ENCODE measurements at regions of chr18 and their contacts with region 1.

Region 1: DNA sequence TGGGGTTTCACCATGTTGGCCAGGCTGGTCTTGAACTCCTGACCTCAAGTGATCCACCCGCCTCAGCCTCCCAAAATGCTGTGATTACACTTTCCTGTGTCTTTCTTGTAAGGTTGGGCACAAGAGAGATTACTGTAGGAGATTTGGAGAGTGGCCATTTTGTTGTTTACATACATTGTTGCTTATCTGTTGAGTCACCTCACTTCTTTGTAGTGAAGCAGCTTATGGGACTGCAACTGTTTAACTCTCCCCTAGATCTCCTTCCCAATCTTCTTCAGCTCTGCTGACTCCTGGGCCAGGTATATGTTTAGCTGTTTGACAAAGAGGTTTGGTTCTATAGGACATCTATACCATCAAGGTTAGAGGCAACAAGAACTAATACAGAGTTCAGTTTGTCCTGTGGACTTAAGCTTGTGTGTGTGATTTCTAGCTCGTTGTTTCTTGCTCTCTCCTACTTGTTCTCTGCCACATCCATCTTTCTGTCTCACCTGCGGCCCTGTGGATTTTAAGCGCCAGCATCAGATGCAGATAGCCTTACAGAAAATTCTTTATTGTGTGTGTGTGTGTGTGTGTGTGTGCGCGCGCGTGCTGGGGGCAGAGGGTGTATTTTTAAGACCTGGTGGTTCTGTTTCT is 95.4 kb downstream of the HAUS1 start:
- DNase-seq: peak; percentile 44 to 91
- H3K4me3 ChIP-seq: no peak overlapping the region
- H3K27ac ChIP-seq: peak overlapping the region; percentile 49
- H3K4me1 ChIP-seq: peaks cover 25% of the 10 kb centered on the region
- H3K27me3 ChIP-seq: no peaks in the 10 kb centered on the region
- CTCF ChIP-seq: no peak

Region 2: GRCh38 chr18:46104128-46104911 is 95.3 kb before region 1 on chr18 and contains the start of gene HAUS1:
- CTCF ChIA-PET with region 1: no interaction called
- POLR2A ChIA-PET with region 1: interaction called, 15 read pairs
- intact Hi-C with region 1: no loop called
- DNase-seq: peak; percentile 74 to 82
- H3K4me3 ChIP-seq: peak within 1 kb of the TSS; percentile 73
- H3K27ac ChIP-seq: no peak within 1 kb of the TSS
- H3K4me1 ChIP-seq: peaks cover 10% of the 10 kb centered on the region; the same call in 1 of the 2 replicates
- H3K27me3 ChIP-seq: no peaks in the 10 kb centered on the region
- CTCF ChIP-seq: no peak
- total RNA-seq, gene HAUS1: 25.3 and 33.3 TPM in 2 replicates

Region 3: GRCh38 chr18:46315187-46315586 is 115.6 kb after region 1 on chr18:
- CTCF ChIA-PET with region 1: interaction called, 10 read pairs
- POLR2A ChIA-PET with region 1: no interaction called
- intact Hi-C with region 1: no loop called
- DNase-seq: peak in 1 of 2 experiments; percentile 55
- H3K4me3 ChIP-seq: no peak overlapping the region
- H3K27ac ChIP-seq: peak overlapping the region; percentile 47
- H3K4me1 ChIP-seq: peaks cover 28% of the 10 kb centered on the region
- H3K27me3 ChIP-seq: no peaks in the 10 kb centered on the region
- CTCF ChIP-seq: no peak